ENCODE measurements at regions of chr6 and their contacts with region 1.

Region 1: DNA sequence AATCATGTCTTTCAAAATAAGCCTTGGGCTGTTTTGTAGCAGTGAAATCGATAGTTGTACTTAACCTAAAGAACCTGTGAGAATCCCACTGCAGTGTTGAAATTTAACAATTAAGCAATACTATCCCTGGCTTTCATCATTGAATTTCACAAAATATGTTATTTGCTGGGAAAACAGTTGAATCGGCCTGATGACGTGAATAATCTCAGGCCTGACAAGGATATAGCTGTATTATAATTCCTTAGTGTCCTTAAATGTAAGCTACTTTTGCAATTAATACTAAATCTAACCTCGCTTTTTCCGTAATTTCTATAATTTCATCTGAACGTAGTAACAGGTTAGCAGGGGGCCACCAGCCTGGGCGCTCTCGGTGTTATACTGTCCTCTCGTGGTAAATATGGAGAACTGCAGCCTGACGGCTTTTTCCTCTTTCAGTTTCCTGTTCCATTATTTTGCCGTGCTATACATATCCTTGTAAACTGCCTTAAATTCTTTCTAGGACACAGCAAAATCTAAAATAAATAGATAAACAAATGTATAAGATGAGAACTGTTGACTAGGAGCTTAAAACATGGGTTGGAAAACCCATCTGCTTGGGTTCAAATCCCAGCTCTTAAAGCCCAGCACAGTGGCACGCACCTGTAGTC is 24.0 kb downstream of the MTFR2 start:
- DNase-seq: peak; percentile 61
- ATAC-seq: peak; percentile 84
- H3K4me3 Mint-ChIP-seq: no peak overlapping the region
- H3K27ac Mint-ChIP-seq: peak overlapping the region; percentile 30
- H3K4me1 Mint-ChIP-seq: peaks cover 7% of the 10 kb centered on the region
- H3K27me3 Mint-ChIP-seq: peaks cover 3% of the 10 kb centered on the region

Region 2: DNA sequence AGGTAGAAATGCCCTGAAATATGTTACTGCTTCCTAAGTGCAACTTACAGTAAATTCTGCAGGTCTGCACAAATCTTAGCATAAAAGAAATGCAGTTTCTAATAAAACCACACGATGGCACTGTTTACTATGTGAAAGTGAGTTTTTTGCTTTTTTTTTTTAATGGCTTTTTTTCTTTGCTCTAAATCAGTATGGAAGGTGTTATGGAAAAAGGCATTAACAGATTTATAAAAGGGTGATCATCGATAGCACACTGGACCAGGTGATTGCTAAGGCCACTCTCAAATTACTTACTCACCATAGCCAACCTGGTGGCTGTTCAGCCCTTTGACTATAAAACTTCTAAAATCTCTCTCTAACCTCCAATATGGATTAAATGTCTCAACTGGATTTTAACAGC is 774.5 kb before region 1 on chr6:
- CTCF ChIA-PET with region 1: interaction called, 15 read pairs
- DNase-seq: no peak
- ATAC-seq: no peak
- H3K4me3 Mint-ChIP-seq: no peak overlapping the region
- H3K27ac Mint-ChIP-seq: no peak overlapping the region
- H3K4me1 Mint-ChIP-seq: peaks cover 9% of the 10 kb centered on the region
- H3K27me3 Mint-ChIP-seq: no peaks in the 10 kb centered on the region

Region 3: GRCh38 chr6:135535989-135536414 is 690.1 kb before region 1 on chr6:
- CTCF ChIA-PET with region 1: interaction called, 17 read pairs
- DNase-seq: no peak
- ATAC-seq: peak; percentile 48
- H3K4me3 Mint-ChIP-seq: no peak overlapping the region
- H3K27ac Mint-ChIP-seq: peak overlapping the region; percentile 73
- H3K4me1 Mint-ChIP-seq: peaks cover 45% of the 10 kb centered on the region
- H3K27me3 Mint-ChIP-seq: no peaks in the 10 kb centered on the region

Region 4: GRCh38 chr6:136077834-136078576 is 148.1 kb before region 1 on chr6:
- CTCF ChIA-PET with region 1: no interaction called
- DNase-seq: no peak
- ATAC-seq: no peak
- H3K4me3 Mint-ChIP-seq: no peak overlapping the region
- H3K27ac Mint-ChIP-seq: no peak overlapping the region
- H3K4me1 Mint-ChIP-seq: no peaks in the 10 kb centered on the region
- H3K27me3 Mint-ChIP-seq: peaks cover 12% of the 10 kb centered on the region

Region 5: GRCh38 chr6:136244061-136244616 is 18.0 kb after region 1 on chr6:
- CTCF ChIA-PET with region 1: interaction called, 10 read pairs
- DNase-seq: no peak
- ATAC-seq: no peak
- H3K4me3 Mint-ChIP-seq: no peak overlapping the region
- H3K27ac Mint-ChIP-seq: no peak overlapping the region
- H3K4me1 Mint-ChIP-seq: peaks cover 32% of the 10 kb centered on the region
- H3K27me3 Mint-ChIP-seq: no peaks in the 10 kb centered on the region

Region 6: GRCh38 chr6:136289579-136290409 is 63.6 kb after region 1 on chr6 and contains the start of gene BCLAF1:
- CTCF ChIA-PET with region 1: interaction called, 10 read pairs
- DNase-seq: peak; percentile 100
- ATAC-seq: peak; percentile 81
- H3K4me3 Mint-ChIP-seq: peak within 1 kb of the TSS; percentile 95
- H3K27ac Mint-ChIP-seq: peak within 1 kb of the TSS; percentile 98
- H3K4me1 Mint-ChIP-seq: peaks cover 38% of the 10 kb centered on the region
- H3K27me3 Mint-ChIP-seq: no peaks in the 10 kb centered on the region
- total RNA-seq, gene BCLAF1: 127 to 179 TPM

Measured in activated CD8-positive, alpha-beta memory T cell treated with anti-CD3 and anti-CD28 coated beads, Interleukin-2, amount 10 ng/mL, durations not matched to agents 7 days and 5 days (primary cell).